ENCODE measurements at regions of chr5 and their contacts with region 1.

Region 1: DNA sequence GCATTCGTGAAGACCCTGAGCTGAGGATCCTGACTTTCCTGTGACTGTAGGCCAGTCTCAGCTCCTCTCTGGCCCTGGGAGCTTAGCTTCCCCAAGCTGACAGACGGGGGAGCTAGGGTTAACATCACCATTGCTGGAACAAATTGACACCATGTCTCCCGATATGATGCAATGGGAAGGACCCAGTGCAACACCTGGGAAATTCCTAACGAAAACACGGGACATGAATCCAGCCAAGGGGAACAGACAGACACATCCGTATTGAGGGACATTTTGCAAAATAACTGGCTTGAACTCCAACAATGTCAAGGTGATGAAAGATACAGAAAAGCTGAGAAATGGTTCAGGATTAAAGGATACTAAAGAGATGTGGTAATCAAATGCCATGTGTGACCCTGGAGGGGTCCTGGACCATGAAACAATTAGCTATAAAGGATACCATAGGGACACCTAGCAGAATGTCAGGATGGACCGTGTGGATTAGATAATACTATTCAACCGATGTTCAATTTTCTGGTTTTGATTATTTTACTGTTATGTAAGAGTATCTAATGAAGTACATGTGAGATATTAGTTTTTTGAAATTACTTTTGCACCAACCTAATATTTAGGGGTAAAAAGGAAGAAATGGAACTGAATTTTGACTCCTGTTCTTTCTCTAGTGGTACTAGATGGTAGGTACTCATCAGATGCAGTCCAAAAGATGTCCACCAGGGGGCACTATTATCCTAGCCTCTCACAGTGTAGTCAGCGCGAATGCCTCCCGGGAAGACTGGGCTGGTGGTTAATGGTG is 52.7 kb downstream of the NDST1 start:
- DNase-seq: peak; percentile 87
- H3K4me3 ChIP-seq: no peak overlapping the region
- H3K27ac ChIP-seq: no peak overlapping the region
- H3K4me1 ChIP-seq: peaks cover 26% of the 10 kb centered on the region
- CTCF ChIP-seq: peak; percentile 95

Region 2: GRCh38 chr5:150428106-150428876 is 132.3 kb before region 1 on chr5:
- CTCF ChIA-PET with region 1: no interaction called
- POLR2A ChIA-PET with region 1: no interaction called
- intact Hi-C with region 1: no loop called
- DNase-seq: no peak
- H3K4me3 ChIP-seq: no peak overlapping the region
- H3K27ac ChIP-seq: no peak overlapping the region
- H3K4me1 ChIP-seq: peaks cover 7% of the 10 kb centered on the region
- CTCF ChIP-seq: no peak

Region 3: GRCh38 chr5:150578781-150579686 is 18.4 kb after region 1 on chr5:
- CTCF ChIA-PET with region 1: no interaction called
- POLR2A ChIA-PET with region 1: no interaction called
- intact Hi-C with region 1: no loop called
- DNase-seq: no peak
- H3K4me3 ChIP-seq: no peak overlapping the region
- H3K27ac ChIP-seq: no peak overlapping the region
- H3K4me1 ChIP-seq: no peaks in the 10 kb centered on the region
- CTCF ChIP-seq: no peak

Region 4: DNA sequence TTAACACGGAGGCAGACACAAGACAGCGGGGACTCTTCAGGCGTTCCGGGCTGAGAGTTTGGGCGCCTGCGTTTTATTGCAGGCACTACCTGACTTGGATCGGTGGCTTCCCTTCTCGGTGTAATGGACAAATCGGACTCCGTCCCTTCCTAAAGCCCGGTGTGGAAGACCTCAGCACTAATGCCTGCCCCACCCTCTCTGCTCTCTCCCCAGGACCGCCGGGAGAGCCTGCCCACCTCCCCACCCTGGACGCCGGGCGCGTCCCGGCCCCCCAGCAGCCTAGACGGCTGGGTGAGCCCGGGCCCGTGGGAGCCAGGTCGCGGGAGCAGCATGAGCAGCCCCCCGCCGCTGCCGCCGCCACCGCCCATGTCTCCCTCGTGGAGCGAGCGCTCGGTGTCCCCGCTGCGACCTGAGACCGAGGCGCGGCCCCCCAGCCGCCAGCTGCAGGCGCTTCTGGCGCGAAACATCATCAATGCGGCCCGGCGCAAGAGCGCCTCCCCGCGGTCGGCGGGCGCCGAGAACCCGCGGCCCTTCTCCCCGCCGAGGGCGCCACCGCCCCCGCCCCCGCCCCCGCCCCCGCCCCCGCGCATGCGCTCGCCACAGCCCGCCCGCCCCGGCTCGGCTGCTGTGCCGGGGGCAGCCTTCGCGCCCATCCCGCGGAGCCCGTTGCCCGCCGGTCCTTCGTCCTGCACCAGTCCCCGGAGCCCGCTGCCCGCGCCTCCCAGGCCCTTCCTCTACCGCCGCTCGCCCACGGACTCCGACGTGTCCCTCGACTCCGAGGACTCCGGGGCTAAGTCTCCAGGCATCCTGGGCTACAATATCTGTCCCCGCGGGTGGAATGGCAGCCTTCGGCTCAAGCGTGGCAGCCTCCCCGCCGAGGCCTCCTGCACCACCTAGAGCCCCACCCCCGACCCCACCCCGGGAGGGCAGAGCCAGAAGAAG is 95.9 kb after region 1 on chr5:
- CTCF ChIA-PET with region 1: interaction called, 3 read pairs
- POLR2A ChIA-PET with region 1: interaction called, 6 read pairs
- intact Hi-C with region 1: loop called (anchors 1 kb)
- DNase-seq: peak; percentile 84
- H3K4me3 ChIP-seq: peak overlapping the region; percentile 70
- H3K27ac ChIP-seq: no peak overlapping the region
- H3K4me1 ChIP-seq: peaks cover 11% of the 10 kb centered on the region
- CTCF ChIP-seq: peak; percentile 56

Region 5: DNA sequence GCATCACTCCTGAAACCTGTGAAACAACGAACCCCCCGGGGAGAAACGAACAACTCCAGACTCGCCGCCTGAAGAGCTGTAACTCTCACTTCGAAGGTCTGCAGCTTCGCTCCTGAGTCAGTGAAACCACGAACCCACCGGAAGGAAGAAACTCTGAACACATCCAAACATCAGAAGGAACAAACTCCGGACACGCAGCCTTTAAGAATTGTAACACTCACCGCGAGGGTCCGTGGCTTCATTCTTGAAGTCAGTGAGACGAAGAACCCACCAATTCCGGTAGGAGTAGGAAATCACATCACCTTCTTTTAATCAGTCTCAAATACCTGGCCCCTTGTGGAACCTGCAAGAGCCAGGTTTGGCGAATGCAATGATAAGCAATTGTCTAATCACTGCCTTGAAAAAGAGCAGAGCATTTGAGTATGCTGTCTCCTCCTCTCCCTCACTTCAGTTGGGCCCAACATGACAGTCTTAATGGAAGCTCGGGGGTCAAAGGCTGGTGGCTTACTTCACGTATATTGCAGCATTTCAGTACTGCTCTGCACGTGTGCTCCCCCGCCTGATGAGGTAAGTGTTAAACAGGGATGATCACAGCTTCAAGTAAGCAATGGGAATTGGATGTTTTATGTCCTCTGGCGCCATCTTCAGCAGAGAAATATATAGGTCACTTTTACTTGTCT is 286.2 kb after region 1 on chr5:
- CTCF ChIA-PET with region 1: no interaction called
- POLR2A ChIA-PET with region 1: no interaction called
- intact Hi-C with region 1: loop called (anchors 1 kb)
- DNase-seq: peak; percentile 77
- H3K4me3 ChIP-seq: no peak overlapping the region
- H3K27ac ChIP-seq: no peak overlapping the region
- H3K4me1 ChIP-seq: peaks cover 5% of the 10 kb centered on the region
- CTCF ChIP-seq: peak; percentile 81

Measured in OCI-LY7 (cell line).